SK-N-SH (cell line): ENCODE measurements at regions of chr19 and their contacts with region 1.

Region 1: GRCh38 chr19:48738557-48739399 is 1.6 kb downstream of the RASIP1 start:
- DNase-seq: peak; percentile 100
- H3K4me3 ChIP-seq: peak overlapping the region; percentile 53 to 57
- H3K27ac ChIP-seq: peak overlapping the region in 1 of 2 experiments; percentile 7; a peak in 1 of 4 replicates
- H3K4me1 ChIP-seq: peaks cover 0 to 16% of the 10 kb centered on the region in 2 experiments; a peak in 1 of 4 replicates
- H3K27me3 ChIP-seq: no peaks in the 10 kb centered on the region
- CTCF ChIP-seq: no peak; the same call in 1 of the 2 replicates
- EP300 ChIP-seq: no peak
- RAD21 ChIP-seq: peak; percentile 49

Region 2: DNA sequence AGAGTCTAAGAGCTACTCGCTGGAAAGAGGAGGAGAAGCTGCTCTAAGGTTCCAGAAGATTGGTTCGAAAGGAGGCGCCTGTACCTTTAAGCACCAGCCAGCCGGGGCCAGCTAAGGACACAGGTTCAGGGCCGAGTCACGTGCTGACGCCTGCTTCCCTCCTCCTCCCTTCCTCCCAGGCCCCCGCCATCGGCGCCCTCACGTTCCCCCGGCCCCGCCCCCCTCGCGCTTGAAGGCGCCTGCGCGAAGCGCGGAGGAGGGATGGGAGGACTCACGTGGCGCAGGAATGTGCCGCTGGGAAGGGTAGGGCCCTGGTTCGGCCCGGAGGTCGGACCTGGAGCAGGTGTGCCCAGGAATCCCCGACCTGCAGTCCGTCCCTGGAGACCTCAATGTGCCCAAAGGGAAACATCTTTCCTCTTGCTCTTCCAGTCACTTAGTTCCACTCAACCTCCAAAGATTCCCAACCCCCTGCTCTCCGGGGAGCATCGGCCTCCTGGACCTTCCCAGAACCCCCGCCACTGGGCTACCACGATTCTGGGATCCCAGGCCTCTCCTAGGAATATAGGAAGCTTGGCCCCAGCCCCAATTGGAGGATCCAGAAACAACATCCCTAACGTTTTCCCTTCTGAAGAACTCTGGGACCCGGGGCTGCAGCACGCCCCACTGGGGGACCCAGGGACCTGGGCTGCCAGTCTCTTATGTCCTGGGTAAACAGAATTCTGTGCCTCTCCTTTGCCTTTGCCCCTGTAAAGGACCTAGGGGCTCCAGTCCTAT is 104.2 kb before region 1 on chr19:
- CTCF ChIA-PET with region 1: no interaction called
- POLR2A ChIA-PET with region 1: no interaction called
- DNase-seq: peak; percentile 90
- H3K4me3 ChIP-seq: peak overlapping the region; percentile 35 to 79
- H3K27ac ChIP-seq: peak overlapping the region; percentile 96 to 98
- H3K4me1 ChIP-seq: peaks cover 31 to 39% of the 10 kb centered on the region in 2 experiments
- H3K27me3 ChIP-seq: no peaks in the 10 kb centered on the region
- CTCF ChIP-seq: no peak
- EP300 ChIP-seq: peak; percentile 38 to 47; a peak in 3 of 4 replicates
- RAD21 ChIP-seq: no peak

Region 3: GRCh38 chr19:48646001-48646721 is 92.6 kb before region 1 on chr19 and contains the start of gene CA11:
- CTCF ChIA-PET with region 1: interaction called, 22 read pairs
- POLR2A ChIA-PET with region 1: interaction called, 9 read pairs
- DNase-seq: peak; percentile 96
- H3K4me3 ChIP-seq: peak within 1 kb of the TSS; percentile 43 to 74
- H3K27ac ChIP-seq: peak within 1 kb of the TSS; percentile 54 to 69
- H3K4me1 ChIP-seq: peaks cover 4 to 6% of the 10 kb centered on the region in 2 experiments; a peak in 2 of 4 replicates
- H3K27me3 ChIP-seq: no peaks in the 10 kb centered on the region
- CTCF ChIP-seq: peak; percentile 76
- EP300 ChIP-seq: no peak
- RAD21 ChIP-seq: peak; percentile 90
- polyA plus RNA-seq, gene CA11: 13.1 and 13.5 TPM in 2 replicates

Region 4: GRCh38 chr19:48713864-48714758 is 24.7 kb before region 1 on chr19:
- CTCF ChIA-PET with region 1: interaction called, 17 read pairs
- POLR2A ChIA-PET with region 1: interaction called, 11 read pairs
- DNase-seq: peak; percentile 98
- H3K4me3 ChIP-seq: peak overlapping the region; percentile 75 to 100
- H3K27ac ChIP-seq: peak overlapping the region; percentile 77 to 85
- H3K4me1 ChIP-seq: peaks cover 8 to 30% of the 10 kb centered on the region in 2 experiments; a peak in 2 of 4 replicates
- H3K27me3 ChIP-seq: no peaks in the 10 kb centered on the region
- CTCF ChIP-seq: no peak
- EP300 ChIP-seq: no peak
- RAD21 ChIP-seq: no peak; the same call in 1 of the 2 replicates

Region 5: DNA sequence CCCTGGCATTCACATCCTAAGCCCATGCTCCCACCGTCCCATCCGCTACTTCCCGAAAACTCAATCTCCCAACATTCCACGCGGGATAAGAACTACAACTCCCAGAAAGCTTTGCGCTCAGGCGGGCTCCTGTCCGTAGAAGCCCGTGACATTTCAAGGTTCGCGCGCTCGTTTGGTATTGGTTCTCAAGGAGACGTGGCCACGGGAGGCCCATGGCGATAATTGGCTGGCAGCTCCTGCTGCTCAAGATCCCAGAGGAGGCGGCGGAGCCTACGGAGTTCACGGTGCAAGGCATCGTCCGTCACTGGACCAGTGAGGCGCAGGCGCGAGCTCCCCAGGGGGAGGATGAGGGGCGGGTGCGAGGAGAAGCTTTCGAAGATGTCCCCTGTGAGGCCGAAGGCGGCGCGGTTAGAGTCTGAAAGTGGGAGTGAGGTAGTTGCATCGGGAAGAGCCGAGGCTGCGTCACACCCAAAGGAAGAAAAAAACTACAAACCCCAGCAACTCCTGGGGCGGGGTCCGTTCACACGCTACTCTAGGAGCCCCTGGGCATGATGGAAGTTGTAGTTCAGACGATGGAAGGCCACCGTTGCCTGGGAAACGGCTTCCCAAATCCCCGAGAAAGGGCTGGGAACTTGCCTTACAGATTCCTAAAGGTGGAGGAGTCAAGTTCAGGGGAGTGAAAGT is 18.0 kb before region 1 on chr19:
- CTCF ChIA-PET with region 1: interaction called, 13 read pairs
- POLR2A ChIA-PET with region 1: interaction called, 11 read pairs
- DNase-seq: peak; percentile 96
- H3K4me3 ChIP-seq: peak overlapping the region; percentile 62 to 68
- H3K27ac ChIP-seq: peak overlapping the region; percentile 87 to 88
- H3K4me1 ChIP-seq: peaks cover 17 to 18% of the 10 kb centered on the region in 2 experiments; a peak in 3 of 4 replicates
- H3K27me3 ChIP-seq: no peaks in the 10 kb centered on the region
- CTCF ChIP-seq: no peak
- EP300 ChIP-seq: no peak
- RAD21 ChIP-seq: no peak